Activated T-helper 1 cell treated with anti-CD3 and anti-CD28 coated beads, Interleukin-12 subunit alpha, Interleukin-12 subunit beta, Interleukin-2, Interleukin-4 antibody, amounts not matched to agents 30 ng/mL and 10 ng/mL and 1 ng/mL, durations not matched to agents 14 hours and 24 hours and 36 hours (primary cell): ENCODE measurements at regions of chr16 and their contacts with region 1.

Region 1: GRCh38 chr16:11094072-11094856 is 149.9 kb downstream of the CLEC16A start:
- DNase-seq: peak; percentile 56
- H3K4me3 Mint-ChIP-seq: peak overlapping the region; percentile 68
- H3K27ac Mint-ChIP-seq: peak overlapping the region; percentile 100
- H3K4me1 Mint-ChIP-seq: peaks cover 70% of the 10 kb centered on the region
- H3K27me3 Mint-ChIP-seq: no peaks in the 10 kb centered on the region

Region 2: GRCh38 chr16:10876799-10877341 is 217.4 kb before region 1 on chr16 and contains the start of gene CIITA:
- intact Hi-C with region 1: loop called (anchors 10 kb)
- DNase-seq: peak; percentile 53
- H3K4me3 Mint-ChIP-seq: peak within 1 kb of the TSS; percentile 86
- H3K27ac Mint-ChIP-seq: peak within 1 kb of the TSS; percentile 59
- H3K4me1 Mint-ChIP-seq: peaks cover 88% of the 10 kb centered on the region
- H3K27me3 Mint-ChIP-seq: peaks cover 14% of the 10 kb centered on the region
- total RNA-seq, gene CIITA: 12.0 and 13.0 TPM in 2 replicates

Region 3: DNA sequence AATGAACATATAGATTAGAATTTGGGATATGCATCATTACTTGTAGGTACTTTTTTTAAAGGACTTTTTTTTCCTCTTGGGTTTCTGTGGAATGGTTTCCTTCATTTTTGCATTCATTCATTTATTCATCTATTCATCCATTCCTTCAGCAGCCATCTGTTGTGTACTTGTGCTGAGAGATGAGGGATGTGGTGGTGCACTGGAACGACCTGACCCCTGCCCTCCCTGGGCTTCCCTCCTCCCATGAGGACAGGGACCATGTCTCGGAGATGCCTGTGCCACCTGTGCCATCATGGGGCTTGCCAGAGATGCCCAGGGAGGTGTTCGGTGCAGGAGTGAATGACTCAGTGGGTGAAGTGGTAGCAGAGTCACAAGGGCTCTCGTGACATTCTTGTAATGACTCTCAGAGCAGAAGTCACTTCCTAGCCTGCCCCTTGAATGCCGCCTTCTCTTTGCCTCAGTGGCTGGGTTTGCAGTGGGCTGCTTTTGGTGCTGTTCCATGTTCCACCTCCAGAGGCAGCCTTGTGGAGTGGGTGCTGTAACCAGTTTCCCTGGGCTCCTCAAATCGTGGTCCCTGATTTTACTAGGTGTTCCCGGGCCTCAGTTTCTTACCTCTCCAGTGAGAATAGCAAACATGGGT is 106.0 kb before region 1 on chr16:
- intact Hi-C with region 1: loop called (anchors 1 kb)
- DNase-seq: peak; percentile 64
- H3K4me3 Mint-ChIP-seq: peak overlapping the region; percentile 65
- H3K27ac Mint-ChIP-seq: peak overlapping the region; percentile 93
- H3K4me1 Mint-ChIP-seq: peaks cover 92% of the 10 kb centered on the region
- H3K27me3 Mint-ChIP-seq: no peaks in the 10 kb centered on the region

Region 4: GRCh38 chr16:11051879-11052808 is 42.1 kb before region 1 on chr16:
- intact Hi-C with region 1: loop called (anchors 1 kb)
- DNase-seq: peak; percentile 75
- H3K4me3 Mint-ChIP-seq: peak overlapping the region; percentile 60
- H3K27ac Mint-ChIP-seq: peak overlapping the region; percentile 83
- H3K4me1 Mint-ChIP-seq: peaks cover 68% of the 10 kb centered on the region
- H3K27me3 Mint-ChIP-seq: no peaks in the 10 kb centered on the region

Region 5: DNA sequence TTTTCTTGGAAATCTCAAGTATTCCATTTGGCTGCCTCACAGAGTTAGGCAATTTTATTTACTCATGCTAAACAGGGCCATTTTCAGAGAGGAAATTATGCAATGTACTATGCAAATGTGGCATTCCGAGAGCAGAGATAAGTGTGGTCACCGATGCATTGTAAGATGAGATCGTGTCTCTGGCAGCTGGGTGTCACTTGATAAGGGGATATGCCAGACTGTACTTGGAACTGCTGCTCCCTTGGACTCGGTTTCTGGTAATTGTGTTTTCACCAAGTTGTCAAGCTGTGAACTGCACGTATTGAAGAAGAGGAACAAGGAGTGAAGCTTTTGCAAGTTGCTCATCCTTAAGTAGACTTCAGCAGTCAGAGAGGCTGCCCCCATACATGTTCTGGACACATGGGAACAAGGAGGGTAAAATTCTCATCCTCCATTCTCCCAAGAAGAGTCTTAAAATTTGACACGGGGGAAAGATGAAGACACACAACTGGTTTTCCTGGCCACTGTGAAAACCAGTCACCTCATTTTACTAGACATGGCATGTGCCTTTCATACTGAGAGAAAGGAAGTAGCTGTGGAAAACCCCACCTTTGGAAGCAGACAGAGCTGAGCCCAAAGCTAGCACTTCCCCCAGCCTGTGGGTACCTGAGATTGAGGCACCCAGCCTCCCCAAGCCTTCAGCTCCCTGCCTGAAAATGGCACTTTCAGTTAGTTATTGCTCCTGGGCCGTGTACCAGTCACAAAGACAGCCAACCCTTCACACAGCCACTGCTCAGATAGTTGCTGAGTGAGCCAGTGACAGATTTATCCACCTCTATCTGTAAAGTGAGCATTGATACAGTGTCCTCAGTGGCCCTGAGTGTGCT is 11.0 kb after region 1 on chr16:
- intact Hi-C with region 1: loop called (anchors 1 kb)
- DNase-seq: peak; percentile 44
- H3K4me3 Mint-ChIP-seq: peak overlapping the region; percentile 65
- H3K27ac Mint-ChIP-seq: peak overlapping the region; percentile 88
- H3K4me1 Mint-ChIP-seq: peaks cover 75% of the 10 kb centered on the region
- H3K27me3 Mint-ChIP-seq: no peaks in the 10 kb centered on the region

Region 6: GRCh38 chr16:11232852-11233726 is 138.8 kb after region 1 on chr16:
- intact Hi-C with region 1: loop called (anchors 1 kb)
- DNase-seq: peak; percentile 91
- H3K4me3 Mint-ChIP-seq: peak overlapping the region; percentile 59
- H3K27ac Mint-ChIP-seq: peak overlapping the region; percentile 95
- H3K4me1 Mint-ChIP-seq: peaks cover 89% of the 10 kb centered on the region
- H3K27me3 Mint-ChIP-seq: no peaks in the 10 kb centered on the region